Activated naive CD4-positive, alpha-beta T cell treated with anti-CD3 and anti-CD28 coated beads for 36 hours (primary cell): ENCODE measurements at regions of chrX and their contacts with region 1.

Region 1: DNA sequence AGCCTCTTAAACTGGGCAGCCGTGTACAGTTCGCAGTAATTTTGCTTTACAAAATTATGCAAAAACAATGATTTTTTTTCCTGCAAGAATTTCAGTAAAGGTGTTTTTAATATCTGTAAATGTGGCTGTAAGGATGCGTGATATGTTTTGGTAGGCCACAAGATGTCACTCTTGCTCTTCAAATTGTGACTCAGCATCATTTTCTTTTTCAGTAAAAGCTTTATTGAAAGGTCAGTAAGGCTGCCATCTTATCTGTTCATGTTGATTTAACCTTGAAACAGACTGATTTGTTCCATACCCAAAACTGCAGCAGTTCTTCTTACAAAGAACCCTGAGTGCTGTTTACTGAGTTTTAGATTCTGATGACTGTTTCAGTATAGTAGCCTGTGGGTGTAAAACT is 39.9 kb downstream of the TXLNG start:
- DNase-seq: no peak
- H3K4me3 Mint-ChIP-seq: no peak overlapping the region
- H3K27ac Mint-ChIP-seq: peak overlapping the region; percentile 24
- H3K4me1 Mint-ChIP-seq: peaks cover 20% of the 10 kb centered on the region
- H3K27me3 Mint-ChIP-seq: no peaks in the 10 kb centered on the region

Region 2: DNA sequence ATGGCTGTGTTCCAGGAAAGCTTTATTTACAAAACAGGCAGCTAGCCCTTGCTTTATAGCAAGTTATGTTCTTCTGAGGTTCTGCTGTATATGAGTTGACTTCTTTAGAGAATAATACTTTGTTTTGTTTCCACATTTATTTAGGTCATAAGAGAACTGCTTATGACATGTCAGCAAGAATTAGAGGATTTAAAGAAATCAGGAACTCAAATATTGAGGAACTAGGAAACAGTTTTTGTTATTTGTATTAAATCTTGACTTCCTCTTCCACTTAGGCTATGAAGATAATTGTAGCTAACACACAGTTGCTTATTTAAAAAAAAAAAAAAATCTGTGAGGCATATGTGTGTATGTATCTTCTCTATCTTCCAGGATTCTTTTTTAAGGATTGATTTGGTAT is 1021.6 kb before region 1 on chrX:
- CTCF ChIA-PET with region 1: no interaction called
- intact Hi-C with region 1: no loop called
- DNase-seq: no peak
- H3K4me3 Mint-ChIP-seq: no peak overlapping the region
- H3K27ac Mint-ChIP-seq: no peak overlapping the region
- H3K4me1 Mint-ChIP-seq: no peaks in the 10 kb centered on the region
- H3K27me3 Mint-ChIP-seq: no peaks in the 10 kb centered on the region

Region 3: DNA sequence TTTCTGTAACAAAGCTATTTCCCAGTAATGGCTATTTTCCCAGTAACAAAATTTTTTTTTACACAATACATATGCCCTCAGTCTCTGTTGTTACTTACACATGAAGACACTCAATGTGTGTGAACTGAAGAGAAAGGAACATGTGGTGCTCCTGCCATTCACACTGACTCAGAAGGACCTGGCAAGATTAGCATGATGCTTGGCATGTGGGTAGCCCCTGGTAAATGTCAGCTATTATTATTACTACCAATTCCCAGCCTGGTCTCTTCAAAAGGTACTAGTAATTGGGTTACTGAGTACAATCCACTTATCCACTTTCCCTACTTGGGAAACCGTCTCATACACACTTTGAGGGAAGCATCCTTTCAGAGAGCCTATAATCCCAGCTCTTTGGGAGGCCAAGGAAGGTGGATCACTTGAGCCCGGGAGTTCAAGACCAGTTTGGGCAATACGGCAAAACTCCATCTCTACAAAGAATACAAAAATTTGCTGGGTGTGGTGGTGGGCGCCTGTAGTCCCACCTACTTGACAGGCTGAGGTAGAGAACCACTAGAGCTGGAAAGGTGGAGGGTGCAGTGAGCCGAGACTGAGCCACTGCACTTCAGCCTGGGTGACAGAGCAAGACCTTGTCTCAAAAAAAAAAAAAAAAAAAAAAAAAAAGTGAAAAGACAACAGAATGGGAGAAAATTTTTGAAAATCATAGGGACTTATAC is 29.3 kb after region 1 on chrX:
- CTCF ChIA-PET with region 1: no interaction called
- intact Hi-C with region 1: loop called (anchors 2 kb)
- DNase-seq: peak; percentile 31
- H3K4me3 Mint-ChIP-seq: peak overlapping the region; percentile 36
- H3K27ac Mint-ChIP-seq: peak overlapping the region; percentile 92
- H3K4me1 Mint-ChIP-seq: peaks cover 63% of the 10 kb centered on the region
- H3K27me3 Mint-ChIP-seq: no peaks in the 10 kb centered on the region

Region 4: GRCh38 chrX:16882702-16883486 is 56.7 kb after region 1 on chrX:
- CTCF ChIA-PET with region 1: interaction called, 10 read pairs
- intact Hi-C with region 1: loop called (anchors 1 kb)
- DNase-seq: peak; percentile 83
- H3K4me3 Mint-ChIP-seq: peak overlapping the region; percentile 73
- H3K27ac Mint-ChIP-seq: peak overlapping the region; percentile 72
- H3K4me1 Mint-ChIP-seq: no peaks in the 10 kb centered on the region
- H3K27me3 Mint-ChIP-seq: no peaks in the 10 kb centered on the region

Region 5: GRCh38 chrX:16946361-16946964 is 120.3 kb after region 1 on chrX and contains the start of gene REPS2:
- CTCF ChIA-PET with region 1: no interaction called
- intact Hi-C with region 1: loop called (anchors 5 kb)
- DNase-seq: peak; percentile 83
- H3K4me3 Mint-ChIP-seq: peak within 1 kb of the TSS; percentile 71
- H3K27ac Mint-ChIP-seq: no peak within 1 kb of the TSS
- H3K4me1 Mint-ChIP-seq: peaks cover 2% of the 10 kb centered on the region
- H3K27me3 Mint-ChIP-seq: no peaks in the 10 kb centered on the region
- total RNA-seq, gene REPS2: not detected

Region 6: GRCh38 chrX:17242470-17242869 is 416.3 kb after region 1 on chrX:
- CTCF ChIA-PET with region 1: no interaction called
- intact Hi-C with region 1: loop called (anchors 10 kb)
- DNase-seq: peak; percentile 59
- H3K4me3 Mint-ChIP-seq: no peak overlapping the region
- H3K27ac Mint-ChIP-seq: no peak overlapping the region
- H3K4me1 Mint-ChIP-seq: no peaks in the 10 kb centered on the region
- H3K27me3 Mint-ChIP-seq: no peaks in the 10 kb centered on the region